Astrocyte of the cerebellum (primary cell): ENCODE measurements at regions of chr9 and their contacts with region 1.

Region 1: DNA sequence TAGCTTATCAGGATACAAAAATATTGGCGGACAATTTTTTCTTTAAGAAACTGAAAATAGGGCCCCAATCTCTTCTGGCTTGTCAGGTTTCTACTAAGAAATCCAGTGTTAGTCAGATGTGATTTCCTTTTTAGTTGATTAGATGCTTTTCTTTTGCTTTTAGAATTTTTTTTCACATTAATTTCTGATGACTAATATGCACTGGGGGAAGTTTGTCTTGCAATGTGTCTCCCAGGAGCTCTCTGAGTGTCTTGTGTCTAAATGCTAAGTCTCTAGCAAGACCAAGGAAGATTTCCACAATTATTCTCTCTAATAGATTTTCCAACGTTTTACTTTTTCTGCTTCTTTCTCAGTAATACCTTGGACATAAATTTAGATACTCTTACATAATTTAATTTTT is 559.8 kb upstream of the TYRP1 start:
- DNase-seq: no peak
- H3K4me3 ChIP-seq: no peak overlapping the region
- CTCF ChIP-seq: no peak

Region 2: GRCh38 chr9:12059148-12059547 is 74.3 kb before region 1 on chr9:
- in situ Hi-C with region 1: loop called (anchors 5 kb)
- DNase-seq: no peak
- H3K4me3 ChIP-seq: no peak overlapping the region
- CTCF ChIP-seq: no peak

Region 3: GRCh38 chr9:12195456-12195855 is 62.0 kb after region 1 on chr9:
- in situ Hi-C with region 1: no loop called
- DNase-seq: no peak
- H3K4me3 ChIP-seq: no peak overlapping the region
- CTCF ChIP-seq: no peak